ENCODE measurements at regions of chr22 and their contacts with region 1.

Region 1: GRCh38 chr22:46681010-46681409 is 57.0 kb downstream of the CERK start:
- DNase-seq: no peak
- ATAC-seq: no peak
- H3K4me3 ChIP-seq: no peak overlapping the region
- H3K27ac ChIP-seq: no peak overlapping the region
- H3K4me1 ChIP-seq: no peaks in the 10 kb centered on the region
- H3K27me3 ChIP-seq: no peaks in the 10 kb centered on the region

Region 2: DNA sequence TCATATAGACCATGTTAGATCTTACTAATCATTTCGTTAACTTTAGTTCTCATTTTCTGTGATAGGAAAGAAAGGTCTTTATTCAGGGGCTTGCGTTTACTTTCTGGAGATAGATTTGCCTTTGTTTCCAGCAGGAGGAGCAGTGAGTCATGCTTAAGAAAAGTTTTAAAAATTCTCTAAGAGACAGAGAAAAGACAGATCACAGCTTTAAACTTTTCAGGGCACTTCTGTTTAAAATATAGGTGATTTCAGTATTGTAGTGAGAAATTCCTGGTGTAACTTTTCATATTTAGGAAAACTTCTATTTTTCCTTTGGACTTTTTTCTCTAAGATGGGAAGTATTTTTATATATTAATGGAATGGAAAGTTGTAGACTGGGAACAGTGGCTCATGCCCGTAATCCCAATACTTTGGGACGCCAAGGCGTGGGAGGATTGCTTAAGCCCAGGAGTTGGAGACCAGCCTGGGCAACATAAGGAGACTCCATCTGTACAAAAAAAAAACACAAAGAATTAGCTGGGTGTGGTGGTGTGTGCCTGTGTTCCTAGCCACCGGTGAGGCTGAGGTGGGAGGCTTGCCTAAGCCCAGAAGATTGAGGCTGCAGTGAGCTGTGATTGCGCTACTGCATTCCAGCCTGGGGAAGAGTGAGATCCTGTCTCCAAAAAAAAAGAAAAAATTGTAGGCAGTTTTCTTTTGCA is 949.1 kb before region 1 on chr22:
- intact Hi-C with region 1: no loop called
- DNase-seq: peak in 1 of 2 donors; percentile 47
- ATAC-seq: no peak
- H3K4me3 ChIP-seq: no peak overlapping the region
- H3K27ac ChIP-seq: no peak overlapping the region
- H3K4me1 ChIP-seq: peaks cover 0 to 3% of the 10 kb centered on the region in 2 donors
- H3K27me3 ChIP-seq: no peaks in the 10 kb centered on the region

Region 3: GRCh38 chr22:46576556-46577367 is 104.2 kb before region 1 on chr22:
- intact Hi-C with region 1: loop called in 1 of 2 experiments (anchors 5 kb)
- DNase-seq: peak; percentile 68 to 82
- ATAC-seq: peak; percentile 37
- H3K4me3 ChIP-seq: peak overlapping the region; percentile 77 to 78
- H3K27ac ChIP-seq: no peak overlapping the region
- H3K4me1 ChIP-seq: no peaks in the 10 kb centered on the region
- H3K27me3 ChIP-seq: no peaks in the 10 kb centered on the region

Region 4: DNA sequence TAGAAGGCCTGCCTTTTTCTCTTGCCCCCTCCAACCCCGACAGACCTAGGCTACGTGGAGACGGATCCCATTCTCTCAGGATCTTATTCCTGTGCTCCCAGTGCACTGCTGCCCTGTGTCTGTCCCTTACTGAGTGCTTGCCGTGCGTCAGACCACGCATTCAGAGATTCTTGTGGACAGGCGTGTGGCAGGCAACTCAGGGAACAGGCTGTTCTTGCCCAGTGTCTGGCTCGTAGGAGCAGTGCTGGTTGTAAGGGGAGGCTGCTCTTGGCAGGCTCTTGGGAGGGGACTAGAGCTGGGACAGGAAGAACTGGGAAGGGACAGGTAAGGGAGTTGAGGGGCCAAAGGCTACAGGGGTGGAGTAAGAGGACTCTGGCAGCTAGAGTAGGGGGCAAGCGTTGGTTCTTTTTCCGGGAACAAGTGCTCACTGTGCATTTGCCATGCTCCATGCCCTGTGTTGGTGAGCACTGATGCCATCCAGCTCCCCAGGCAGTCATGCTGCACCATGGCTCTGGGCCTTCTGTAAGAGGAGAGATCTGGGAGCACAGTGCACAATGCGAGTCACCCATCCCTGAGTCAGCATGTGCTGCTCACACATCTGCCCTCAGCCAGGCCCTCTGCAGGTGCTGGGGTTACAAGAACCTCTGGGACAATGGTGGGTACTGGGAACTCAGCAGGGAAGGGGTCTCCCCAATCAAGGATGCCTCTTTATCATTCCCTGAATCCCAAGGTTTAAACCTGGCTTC is 200.5 kb after region 1 on chr22:
- intact Hi-C with region 1: no loop called
- DNase-seq: no peak
- ATAC-seq: no peak
- H3K4me3 ChIP-seq: no peak overlapping the region
- H3K27ac ChIP-seq: no peak overlapping the region
- H3K4me1 ChIP-seq: no peaks in the 10 kb centered on the region
- H3K27me3 ChIP-seq: no peaks in the 10 kb centered on the region